OCI-LY7 (cell line): ENCODE measurements at regions of chr2 and their contacts with region 1.

Region 1: DNA sequence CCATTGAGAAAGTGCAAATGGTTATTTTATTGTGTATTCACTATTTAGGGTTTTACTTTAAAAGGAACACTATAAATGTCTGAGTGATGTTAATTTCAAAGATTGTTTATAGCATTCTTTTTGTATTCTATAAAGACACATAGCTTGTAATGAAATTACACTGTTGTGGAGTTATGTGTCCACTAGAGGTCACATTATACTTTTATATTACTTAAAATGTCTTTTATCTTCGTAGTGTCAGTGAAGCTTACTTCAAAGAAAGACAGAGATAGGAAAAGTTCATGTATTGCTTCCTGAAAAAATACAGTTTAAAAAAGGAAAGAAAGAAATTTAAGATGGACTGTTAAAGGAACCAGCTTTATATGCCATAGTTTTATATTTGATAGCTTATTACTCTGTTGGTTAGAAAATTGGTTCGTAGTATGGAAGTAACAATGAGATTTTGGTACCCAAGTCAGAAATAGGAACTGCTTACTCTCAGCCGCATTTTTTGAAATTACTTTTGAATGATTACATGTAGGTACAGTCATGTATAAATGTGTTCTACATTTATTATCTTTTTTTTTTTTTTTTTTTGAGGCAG is 20.5 kb downstream of the APLF start:
- DNase-seq: peak; percentile 56
- H3K4me3 ChIP-seq: no peak overlapping the region
- H3K27ac ChIP-seq: no peak overlapping the region
- H3K4me1 ChIP-seq: no peaks in the 10 kb centered on the region
- CTCF ChIP-seq: peak; percentile 93

Region 2: GRCh38 chr2:68411397-68412126 is 76.3 kb before region 1 on chr2:
- CTCF ChIA-PET with region 1: no interaction called
- POLR2A ChIA-PET with region 1: no interaction called
- intact Hi-C with region 1: no loop called
- DNase-seq: peak; percentile 91
- H3K4me3 ChIP-seq: peak overlapping the region; percentile 47
- H3K27ac ChIP-seq: peak overlapping the region; percentile 92
- H3K4me1 ChIP-seq: peaks cover 57% of the 10 kb centered on the region
- CTCF ChIP-seq: no peak

Region 3: DNA sequence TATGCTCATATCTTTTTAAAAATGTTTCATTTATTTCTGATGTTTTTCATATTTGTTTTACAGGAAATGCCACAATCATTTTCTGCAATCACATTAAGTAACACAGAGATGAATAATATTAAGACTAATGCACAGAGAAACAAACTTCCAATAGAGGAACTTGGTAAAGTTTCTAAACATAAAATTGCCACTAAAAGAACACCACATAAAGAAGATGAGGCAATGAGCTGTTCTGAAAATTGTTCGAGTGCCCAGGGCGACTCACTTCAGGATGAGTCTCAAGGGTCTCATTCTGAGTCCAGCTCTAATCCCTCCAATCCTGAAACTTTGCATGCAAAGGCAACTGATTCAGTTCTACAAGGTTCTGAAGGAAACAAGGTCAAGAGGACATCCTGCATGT is 49.9 kb after region 1 on chr2:
- CTCF ChIA-PET with region 1: no interaction called
- POLR2A ChIA-PET with region 1: no interaction called
- intact Hi-C with region 1: no loop called
- DNase-seq: no peak
- H3K4me3 ChIP-seq: no peak overlapping the region
- H3K27ac ChIP-seq: no peak overlapping the region
- H3K4me1 ChIP-seq: no peaks in the 10 kb centered on the region
- CTCF ChIP-seq: no peak

Region 4: DNA sequence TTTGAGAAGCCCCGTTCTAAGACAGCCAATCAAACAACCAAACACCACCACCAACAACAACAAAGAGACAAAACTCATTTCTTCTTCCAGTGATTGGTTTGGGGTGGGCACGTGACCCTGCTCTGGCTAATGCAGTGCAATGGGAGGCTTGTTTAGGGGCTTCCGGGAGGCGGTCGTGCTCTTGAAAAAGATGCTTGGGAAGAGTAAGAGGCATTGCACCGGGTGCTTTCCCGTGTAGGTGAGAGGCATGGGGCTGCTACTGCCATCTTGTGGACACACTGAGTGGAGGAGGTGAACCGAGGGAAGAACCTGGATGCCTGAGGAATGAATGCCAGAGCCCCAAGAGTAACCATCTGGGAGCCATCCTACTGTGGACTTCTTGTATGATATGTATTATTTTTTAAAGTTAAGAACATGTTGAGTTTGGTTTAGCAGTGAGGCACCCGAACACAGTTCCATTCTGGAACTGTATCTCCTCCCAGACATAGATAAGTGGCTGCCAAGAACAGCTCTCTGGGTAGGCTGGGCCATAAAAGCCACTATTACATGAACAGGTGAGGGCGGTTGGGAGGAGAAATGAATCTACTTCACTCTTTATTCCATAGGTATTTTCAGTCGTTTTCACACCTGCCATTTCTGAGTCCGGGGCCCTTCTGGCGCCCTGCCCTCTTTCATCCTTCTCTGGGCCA is 227.6 kb after region 1 on chr2:
- CTCF ChIA-PET with region 1: no interaction called
- POLR2A ChIA-PET with region 1: no interaction called
- intact Hi-C with region 1: loop called (anchors 5 kb)
- DNase-seq: peak; percentile 87
- H3K4me3 ChIP-seq: peak overlapping the region; percentile 51
- H3K27ac ChIP-seq: peak overlapping the region; percentile 68
- H3K4me1 ChIP-seq: peaks cover 31% of the 10 kb centered on the region
- CTCF ChIP-seq: peak; percentile 90